Naive thymus-derived CD4-positive, alpha-beta T cell (primary cell): ENCODE measurements at regions of chr5 and their contacts with region 1.

Region 1: GRCh38 chr5:149828161-149828884 is 98.2 kb downstream of the PPARGC1B start:
- DNase-seq: peak; percentile 47 to 79 (median 72)
- ATAC-seq: peak; percentile 81
- H3K4me3 ChIP-seq: no peak overlapping the region
- H3K4me3 Mint-ChIP-seq: no peak overlapping the region
- H3K27ac ChIP-seq: no peak overlapping the region
- H3K27ac Mint-ChIP-seq: no peak overlapping the region
- H3K4me1 ChIP-seq: no peaks in the 10 kb centered on the region
- H3K4me1 Mint-ChIP-seq: peaks cover 0 to 10% (median 4%) of the 10 kb centered on the region in 7 donors
- H3K27me3 ChIP-seq: no peaks in the 10 kb centered on the region
- H3K27me3 Mint-ChIP-seq: no peaks in the 10 kb centered on the region

Region 2: GRCh38 chr5:149636851-149637246 is 191.5 kb before region 1 on chr5:
- CTCF ChIA-PET with region 1: interaction called, 93 read pairs
- POLR2A ChIA-PET with region 1: no interaction called
- intact Hi-C with region 1: loop called in 1 of 2 experiments (anchors 1 kb)
- DNase-seq: peak in 7 of 9 donors; percentile 24 to 68 (median 43)
- ATAC-seq: peak; percentile 77
- H3K4me3 ChIP-seq: no peak overlapping the region
- H3K4me3 Mint-ChIP-seq: no peak overlapping the region
- H3K27ac ChIP-seq: no peak overlapping the region
- H3K27ac Mint-ChIP-seq: no peak overlapping the region
- H3K4me1 ChIP-seq: no peaks in the 10 kb centered on the region
- H3K4me1 Mint-ChIP-seq: peaks cover 0 to 8% (median 0%) of the 10 kb centered on the region in 7 donors
- H3K27me3 ChIP-seq: no peaks in the 10 kb centered on the region
- H3K27me3 Mint-ChIP-seq: peaks cover 0 to 3% (median 0%) of the 10 kb centered on the region in 5 donors

Region 3: DNA sequence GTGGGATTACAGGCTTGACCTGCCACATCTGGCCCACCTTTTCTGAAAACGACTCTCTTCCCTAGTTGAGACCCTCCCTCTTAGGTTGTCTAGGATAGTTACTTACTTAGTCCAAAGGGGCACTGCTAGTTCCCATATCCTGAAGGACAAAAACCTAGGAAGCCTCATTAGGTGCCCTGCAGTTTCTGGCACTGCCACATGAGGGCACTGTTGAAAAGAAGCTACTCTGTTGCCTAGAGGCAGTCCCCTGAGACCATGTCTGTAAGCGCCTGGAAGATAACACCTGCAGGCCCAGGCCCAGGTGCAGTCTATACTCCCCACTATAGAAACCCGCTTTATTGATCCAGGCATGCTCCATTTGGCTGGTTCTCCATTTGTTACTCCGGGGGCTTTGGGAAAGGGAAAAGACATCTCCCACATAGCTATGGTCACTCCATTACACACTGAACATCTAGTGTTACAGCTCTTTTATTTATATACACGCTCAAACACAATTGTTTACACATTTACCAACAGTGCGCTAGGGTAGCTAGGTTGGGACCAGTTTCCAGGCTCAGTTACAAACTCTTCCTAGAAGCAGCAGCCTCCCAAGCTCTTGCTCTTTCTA is 171.6 kb before region 1 on chr5:
- CTCF ChIA-PET with region 1: no interaction called
- POLR2A ChIA-PET with region 1: no interaction called
- intact Hi-C with region 1: loop called (anchors 1 kb)
- DNase-seq: no peak
- ATAC-seq: peak; percentile 44
- H3K4me3 ChIP-seq: no peak overlapping the region
- H3K4me3 Mint-ChIP-seq: no peak overlapping the region
- H3K27ac ChIP-seq: no peak overlapping the region
- H3K27ac Mint-ChIP-seq: no peak overlapping the region
- H3K4me1 ChIP-seq: no peaks in the 10 kb centered on the region
- H3K4me1 Mint-ChIP-seq: no peaks in the 10 kb centered on the region
- H3K27me3 ChIP-seq: no peaks in the 10 kb centered on the region
- H3K27me3 Mint-ChIP-seq: peaks cover 5 to 25% (median 10%) of the 10 kb centered on the region in 5 donors

Region 4: DNA sequence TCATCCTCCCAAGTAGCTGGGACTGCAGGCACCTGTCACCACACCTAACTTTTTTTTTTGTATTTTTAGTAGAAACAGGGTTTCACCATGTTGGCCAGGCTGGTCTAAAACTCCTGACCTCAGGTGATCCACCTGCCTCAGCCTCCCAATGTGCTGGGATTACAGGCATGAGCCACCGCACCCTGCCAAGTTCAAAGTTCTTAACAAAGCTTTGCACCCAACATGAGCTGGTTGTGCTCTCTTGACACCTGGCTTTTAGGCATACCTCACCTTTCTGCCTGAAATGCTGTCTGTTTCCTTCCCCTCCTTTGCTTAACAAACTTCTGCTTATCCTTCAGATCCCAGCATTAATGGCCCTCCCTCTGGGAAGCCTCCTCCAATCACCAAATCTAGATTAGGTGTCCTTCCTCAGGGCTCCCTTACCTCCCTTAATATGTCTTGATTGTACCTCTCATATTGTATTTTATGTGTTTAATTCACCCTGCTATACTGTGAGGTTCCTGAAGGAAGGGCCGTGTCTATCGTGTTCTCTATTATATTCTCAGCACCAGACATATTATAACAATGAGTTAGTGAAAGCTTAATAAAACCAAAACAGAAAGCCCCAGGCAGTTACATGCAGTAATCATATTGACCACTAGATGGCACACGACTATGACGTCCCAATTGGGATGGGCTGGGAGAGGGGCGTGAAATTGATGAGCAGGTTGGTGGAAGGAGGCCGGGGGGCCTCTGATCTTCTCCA is 161.1 kb before region 1 on chr5:
- CTCF ChIA-PET with region 1: interaction called, 18 read pairs
- POLR2A ChIA-PET with region 1: interaction called, 3 read pairs
- intact Hi-C with region 1: loop called (anchors 1 kb)
- DNase-seq: no peak
- ATAC-seq: peak; percentile 57
- H3K4me3 ChIP-seq: no peak overlapping the region
- H3K4me3 Mint-ChIP-seq: no peak overlapping the region
- H3K27ac ChIP-seq: no peak overlapping the region
- H3K27ac Mint-ChIP-seq: no peak overlapping the region
- H3K4me1 ChIP-seq: no peaks in the 10 kb centered on the region
- H3K4me1 Mint-ChIP-seq: peaks cover 0 to 4% (median 0%) of the 10 kb centered on the region in 7 donors
- H3K27me3 ChIP-seq: no peaks in the 10 kb centered on the region
- H3K27me3 Mint-ChIP-seq: peaks cover 0 to 10% (median 4%) of the 10 kb centered on the region in 5 donors